Right ventricle myocardium inferior (tissue), 1 donor: ENCODE measurements at regions of chr7 and their contacts with region 1.

Region 1: DNA sequence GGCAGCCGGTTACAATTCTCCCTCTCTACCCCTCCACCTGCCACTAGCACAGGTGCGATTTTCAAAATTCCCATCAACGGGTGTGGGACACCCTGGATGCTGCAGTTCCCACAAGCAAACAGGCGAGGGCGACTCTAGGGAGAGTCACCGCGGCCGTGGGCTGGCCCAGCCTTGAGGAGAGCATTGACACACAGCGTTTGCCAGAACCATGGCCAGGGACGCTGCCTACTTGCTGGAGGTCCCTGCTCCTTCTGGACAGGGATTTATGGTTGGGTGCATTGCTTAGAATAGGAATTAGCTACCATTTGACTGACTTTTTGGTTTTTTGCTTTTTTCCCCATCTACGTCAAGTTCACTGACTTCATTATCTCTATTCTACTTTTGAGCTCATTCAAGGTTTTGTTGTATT is 19.0 kb upstream of the CLDN4 start:
- DNase-seq: peak; percentile 82
- ATAC-seq: peak; percentile 82

Region 2: GRCh38 chr7:73851410-73852234 is 39.9 kb after region 1 on chr7:
- intact Hi-C with region 1: loop called (anchors 1 kb)
- DNase-seq: no peak
- ATAC-seq: peak; percentile 49